ENCODE measurements at regions of chr5 and their contacts with region 1.

Region 1: GRCh38 chr5:55072666-55073065 is 29.8 kb upstream of the GZMA start:
- DNase-seq: no peak
- ATAC-seq: no peak
- H3K4me3 ChIP-seq: no peak overlapping the region
- H3K27ac ChIP-seq: no peak overlapping the region
- H3K4me1 ChIP-seq: no peaks in the 10 kb centered on the region
- H3K27me3 ChIP-seq: no peaks in the 10 kb centered on the region
- CTCF ChIP-seq: no peak

Region 2: DNA sequence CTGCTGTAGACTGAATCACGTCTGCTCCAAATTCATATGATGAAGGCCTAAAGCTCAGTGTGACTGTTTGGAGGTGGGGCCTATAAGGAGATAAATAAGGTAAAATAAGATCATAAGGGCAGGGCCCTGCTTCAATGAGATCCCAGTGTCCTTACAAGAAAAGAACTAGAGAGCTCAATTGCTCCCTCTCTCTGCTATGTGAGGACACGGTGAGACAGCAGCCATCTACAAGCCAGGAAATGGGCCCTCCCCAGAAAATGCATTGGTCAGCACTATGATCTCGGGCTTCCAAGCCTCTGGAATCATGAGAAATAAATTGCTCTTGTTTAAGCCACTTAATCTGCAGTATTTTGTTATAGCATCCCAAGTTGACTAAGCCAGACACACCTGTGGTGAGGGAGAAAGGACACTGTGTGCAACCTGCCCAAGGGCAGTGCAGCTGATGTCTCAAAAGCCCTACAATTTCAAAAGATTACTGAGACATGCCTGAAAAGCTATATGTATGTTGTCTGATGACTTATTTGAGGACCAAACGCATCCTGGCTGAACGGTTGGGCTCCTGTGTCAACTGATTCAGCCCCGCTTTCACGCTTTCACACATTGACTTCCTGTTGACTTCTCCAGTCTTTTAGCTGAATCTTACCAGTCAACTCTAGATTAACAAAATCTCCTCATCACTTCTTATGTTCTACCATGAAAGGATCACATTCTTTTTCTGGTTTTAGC is 35.5 kb before region 1 on chr5:
- CTCF ChIA-PET with region 1: no interaction called
- POLR2A ChIA-PET with region 1: interaction called, 12 read pairs
- intact Hi-C with region 1: no loop called
- DNase-seq: no peak
- ATAC-seq: no peak
- H3K4me3 ChIP-seq: no peak overlapping the region
- H3K27ac ChIP-seq: no peak overlapping the region
- H3K4me1 ChIP-seq: no peaks in the 10 kb centered on the region
- H3K27me3 ChIP-seq: no peaks in the 10 kb centered on the region
- CTCF ChIP-seq: no peak

Region 3: DNA sequence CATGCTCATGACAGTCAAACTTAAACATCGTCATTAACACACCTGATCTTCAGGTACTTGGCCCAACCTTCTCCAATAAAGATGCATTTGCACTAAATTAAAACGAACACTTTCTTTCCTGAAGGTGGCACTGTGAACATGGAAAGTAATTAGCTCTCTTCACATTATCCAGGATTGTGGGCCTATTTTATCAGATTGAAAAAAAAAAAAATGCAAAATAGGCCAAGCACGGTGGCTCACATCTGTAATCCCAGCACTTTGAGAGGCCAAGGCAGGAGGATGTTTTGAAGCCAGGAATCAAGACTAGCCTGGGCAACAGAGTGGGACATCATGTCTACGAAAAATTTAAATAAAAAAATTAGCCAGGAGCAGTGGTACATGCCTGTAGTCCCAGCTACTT is 114.7 kb after region 1 on chr5:
- CTCF ChIA-PET with region 1: no interaction called
- POLR2A ChIA-PET with region 1: no interaction called
- intact Hi-C with region 1: no loop called
- DNase-seq: peak; percentile 44
- ATAC-seq: peak; percentile 31; the same call in 1 of the 2 replicates
- H3K4me3 ChIP-seq: no peak overlapping the region
- H3K27ac ChIP-seq: no peak overlapping the region
- H3K4me1 ChIP-seq: peaks cover 13% of the 10 kb centered on the region
- H3K27me3 ChIP-seq: no peaks in the 10 kb centered on the region
- CTCF ChIP-seq: peak; percentile 41